ENCODE measurements at regions of chr1 and their contacts with region 1.

Region 1: GRCh38 chr1:15430787-15431570 is 7.3 kb upstream of the CTRC start:
- DNase-seq: peak; percentile 83
- ATAC-seq: peak; percentile 86
- H3K4me3 ChIP-seq: no peak overlapping the region
- H3K4me3 Mint-ChIP-seq: no peak overlapping the region
- H3K27ac ChIP-seq: peak overlapping the region in 1 of 2 donors; percentile 28
- H3K27ac Mint-ChIP-seq: no peak overlapping the region
- H3K4me1 ChIP-seq: no peaks in the 10 kb centered on the region
- H3K4me1 Mint-ChIP-seq: no peaks in the 10 kb centered on the region
- H3K27me3 ChIP-seq: no peaks in the 10 kb centered on the region
- H3K27me3 Mint-ChIP-seq: no peaks in the 10 kb centered on the region
- CTCF ChIP-seq: peak; percentile 98

Region 2: DNA sequence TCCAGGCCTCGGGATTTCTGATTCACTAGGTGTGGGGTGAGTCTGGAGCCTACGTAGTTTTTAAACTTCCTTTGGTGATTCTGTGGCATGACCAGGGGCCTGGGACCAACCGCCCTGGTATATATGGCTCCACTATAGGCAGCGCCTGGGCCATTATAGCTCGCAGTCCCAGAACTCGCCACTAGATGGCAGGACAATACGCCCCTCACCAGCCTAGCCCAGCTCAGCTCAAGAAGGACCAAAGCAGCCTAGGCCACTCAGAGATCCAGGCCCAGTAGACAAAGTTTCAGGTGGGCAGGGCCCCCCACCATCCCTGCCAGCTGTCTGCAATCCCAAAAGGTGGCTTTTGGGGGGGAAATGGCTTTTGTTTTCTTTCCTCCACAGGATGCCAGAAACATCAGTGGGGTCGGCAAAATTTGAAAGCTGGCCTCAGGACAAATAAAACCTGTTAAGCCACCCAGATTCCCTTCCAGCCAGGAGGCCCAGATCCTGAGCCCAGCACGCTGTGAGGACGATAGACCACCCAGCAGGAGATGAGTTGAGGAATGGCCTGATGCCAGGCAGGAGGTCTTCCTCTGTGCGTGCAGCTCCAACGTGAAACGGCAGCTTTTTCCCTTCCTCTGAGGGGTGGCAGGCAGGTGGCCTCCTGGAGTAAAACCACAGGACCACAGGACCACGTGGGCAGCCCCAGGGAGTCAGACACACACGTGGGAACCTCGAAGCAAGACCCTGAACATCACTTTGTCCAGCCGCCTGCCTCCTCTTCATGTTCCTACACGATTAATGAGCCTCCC is 302.3 kb before region 1 on chr1:
- CTCF ChIA-PET with region 1: interaction called, 18 read pairs
- POLR2A ChIA-PET with region 1: no interaction called
- intact Hi-C with region 1: no loop called
- DNase-seq: peak; percentile 66
- ATAC-seq: peak; percentile 81
- H3K4me3 ChIP-seq: no peak overlapping the region
- H3K4me3 Mint-ChIP-seq: no peak overlapping the region
- H3K27ac ChIP-seq: no peak overlapping the region
- H3K27ac Mint-ChIP-seq: no peak overlapping the region
- H3K4me1 ChIP-seq: no peaks in the 10 kb centered on the region
- H3K4me1 Mint-ChIP-seq: no peaks in the 10 kb centered on the region
- H3K27me3 ChIP-seq: peaks cover 0 to 11% (median 4%) of the 10 kb centered on the region in 4 experiments
- H3K27me3 Mint-ChIP-seq: peaks cover 15% of the 10 kb centered on the region
- CTCF ChIP-seq: peak; percentile 89

Region 3: DNA sequence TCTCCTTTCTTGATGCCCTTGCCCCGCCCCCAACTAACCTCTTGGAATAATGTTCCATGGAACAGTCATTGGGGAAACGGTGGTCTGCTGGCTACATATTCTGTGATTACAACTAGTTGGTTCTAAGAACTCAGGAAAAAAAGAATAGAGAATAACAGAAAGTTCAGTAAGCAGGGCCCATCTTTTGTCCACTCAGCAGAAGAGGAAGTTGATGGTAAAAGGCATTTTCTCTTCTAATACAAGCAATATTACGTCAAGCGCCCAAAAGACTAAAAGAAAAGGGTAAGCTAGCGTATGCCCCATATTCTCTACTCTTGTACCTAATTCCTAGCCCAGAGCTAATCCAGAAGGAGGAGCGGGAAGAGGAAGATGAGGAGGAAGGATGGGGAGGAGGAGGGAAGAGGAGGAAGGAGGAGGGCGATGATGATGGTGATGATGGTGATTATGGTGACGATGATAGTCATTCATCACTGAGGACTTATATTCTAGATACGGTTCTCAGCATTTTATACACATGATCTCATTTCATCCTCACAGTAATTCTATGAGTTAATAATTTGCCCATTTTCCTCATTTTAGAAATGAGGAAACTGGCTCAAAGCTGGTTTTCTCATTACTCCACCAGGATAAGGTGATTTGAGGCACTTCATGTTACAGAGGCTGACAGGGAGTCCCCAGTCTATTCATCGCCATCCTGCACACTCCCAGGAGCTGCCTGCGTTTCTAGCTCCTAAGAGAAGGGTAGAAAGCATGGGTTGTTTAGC is 97.8 kb before region 1 on chr1:
- CTCF ChIA-PET with region 1: interaction called, 14 read pairs
- POLR2A ChIA-PET with region 1: no interaction called
- intact Hi-C with region 1: no loop called
- DNase-seq: no peak
- ATAC-seq: no peak
- H3K4me3 ChIP-seq: no peak overlapping the region
- H3K4me3 Mint-ChIP-seq: no peak overlapping the region
- H3K27ac ChIP-seq: no peak overlapping the region
- H3K27ac Mint-ChIP-seq: no peak overlapping the region
- H3K4me1 ChIP-seq: no peaks in the 10 kb centered on the region
- H3K4me1 Mint-ChIP-seq: no peaks in the 10 kb centered on the region
- H3K27me3 ChIP-seq: peaks cover 0 to 12% (median 2%) of the 10 kb centered on the region in 4 experiments
- H3K27me3 Mint-ChIP-seq: peaks cover 43% of the 10 kb centered on the region
- CTCF ChIP-seq: no peak

Region 4: DNA sequence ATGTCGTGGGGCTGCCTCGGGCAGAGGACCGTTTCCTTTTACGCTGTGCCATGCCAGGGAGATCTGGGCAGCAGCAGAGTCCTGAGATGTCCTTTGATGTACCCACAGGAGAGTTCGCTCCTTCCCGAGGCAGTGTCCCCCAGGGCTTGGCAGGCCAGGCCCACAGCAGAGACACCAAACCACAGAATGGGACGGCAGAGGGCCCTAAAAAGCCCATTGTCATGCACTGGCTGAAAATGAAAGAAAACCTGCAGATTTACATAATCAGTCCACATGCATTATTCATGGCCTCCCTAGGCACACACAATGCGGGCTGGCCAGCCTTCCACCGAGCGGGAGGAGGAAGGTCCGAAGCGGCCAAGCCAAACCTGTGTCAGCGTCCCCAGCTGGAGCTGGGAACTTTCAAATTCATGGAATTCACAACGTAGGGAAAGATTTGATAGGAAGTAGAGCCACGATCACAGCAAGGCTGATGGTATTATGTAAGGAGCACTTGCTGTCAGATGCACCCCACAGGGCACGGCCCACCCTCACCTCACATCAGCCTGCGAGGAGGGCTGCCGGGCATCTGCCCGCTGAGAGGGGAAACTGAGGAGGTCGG is 46.6 kb before region 1 on chr1:
- CTCF ChIA-PET with region 1: interaction called, 8 read pairs
- POLR2A ChIA-PET with region 1: no interaction called
- intact Hi-C with region 1: loop called (anchors 5 kb)
- DNase-seq: peak; percentile 49
- ATAC-seq: peak; percentile 53
- H3K4me3 ChIP-seq: peak overlapping the region in 3 of 5 experiments; percentile 8 to 31 (median 15)
- H3K4me3 Mint-ChIP-seq: peak overlapping the region; percentile 93
- H3K27ac ChIP-seq: no peak overlapping the region
- H3K27ac Mint-ChIP-seq: no peak overlapping the region
- H3K4me1 ChIP-seq: peaks cover 7 to 23% of the 10 kb centered on the region in 2 donors
- H3K4me1 Mint-ChIP-seq: peaks cover 24% of the 10 kb centered on the region
- H3K27me3 ChIP-seq: peaks cover 0 to 9% (median 7%) of the 10 kb centered on the region in 4 experiments
- H3K27me3 Mint-ChIP-seq: peaks cover 12% of the 10 kb centered on the region
- CTCF ChIP-seq: no peak

Measured in B cell (primary cell).